OCI-LY7 (cell line): ENCODE measurements at regions of chr14 and their contacts with region 1.

Region 1: GRCh38 chr14:75307700-75308379 is 29.2 kb downstream of the FOS start:
- DNase-seq: peak; percentile 86
- H3K4me3 ChIP-seq: no peak overlapping the region
- H3K27ac ChIP-seq: peak overlapping the region; percentile 19
- H3K4me1 ChIP-seq: peaks cover 31% of the 10 kb centered on the region
- CTCF ChIP-seq: peak; percentile 100

Region 2: GRCh38 chr14:74945823-74946682 is 361.8 kb before region 1 on chr14:
- CTCF ChIA-PET with region 1: no interaction called
- POLR2A ChIA-PET with region 1: no interaction called
- intact Hi-C with region 1: loop called (anchors 5 kb)
- DNase-seq: peak; percentile 79
- H3K4me3 ChIP-seq: no peak overlapping the region
- H3K27ac ChIP-seq: no peak overlapping the region
- H3K4me1 ChIP-seq: peaks cover 46% of the 10 kb centered on the region
- CTCF ChIP-seq: peak; percentile 95

Region 3: DNA sequence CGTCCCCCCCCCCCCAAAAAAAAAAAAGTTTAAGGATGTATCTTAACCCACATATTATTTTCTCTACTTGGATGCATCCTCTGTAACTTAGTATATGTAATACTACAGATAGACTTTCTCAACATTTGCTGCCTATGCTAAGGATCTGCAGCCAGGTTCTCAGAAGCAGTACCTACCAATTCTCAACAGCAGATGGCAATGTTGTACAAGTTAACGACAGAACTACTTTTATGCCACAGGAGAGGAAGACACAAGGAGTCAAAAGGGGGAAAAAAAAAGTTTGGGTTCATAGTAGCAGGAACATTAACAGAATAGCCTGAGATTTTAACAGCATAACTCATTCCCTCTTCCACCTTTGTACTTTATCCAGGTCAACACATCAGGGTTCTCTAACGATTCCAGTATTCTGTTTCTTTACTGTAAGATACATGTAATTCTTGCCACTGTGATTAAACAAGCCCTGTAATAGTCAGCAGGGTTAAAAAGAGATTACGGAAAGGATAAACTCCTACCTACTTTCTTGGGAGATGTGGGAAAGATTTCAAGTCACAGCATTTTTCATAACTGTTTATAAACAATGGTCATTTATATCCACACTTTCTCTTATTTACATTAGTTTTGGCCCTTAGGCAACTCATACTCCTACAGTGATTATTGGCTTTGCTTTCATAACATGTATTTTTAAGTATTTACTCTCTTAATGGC is 175.3 kb before region 1 on chr14:
- CTCF ChIA-PET with region 1: interaction called, 3 read pairs
- POLR2A ChIA-PET with region 1: interaction called, 3 read pairs
- intact Hi-C with region 1: loop called (anchors 1 kb)
- DNase-seq: peak; percentile 82
- H3K4me3 ChIP-seq: no peak overlapping the region
- H3K27ac ChIP-seq: no peak overlapping the region
- H3K4me1 ChIP-seq: peaks cover 15% of the 10 kb centered on the region
- CTCF ChIP-seq: peak; percentile 96

Region 4: GRCh38 chr14:75292081-75292563 is 15.7 kb before region 1 on chr14:
- CTCF ChIA-PET with region 1: no interaction called
- POLR2A ChIA-PET with region 1: no interaction called
- intact Hi-C with region 1: no loop called
- DNase-seq: no peak
- H3K4me3 ChIP-seq: no peak overlapping the region
- H3K27ac ChIP-seq: no peak overlapping the region
- H3K4me1 ChIP-seq: peaks cover 31% of the 10 kb centered on the region
- CTCF ChIP-seq: no peak

Region 5: GRCh38 chr14:75452900-75453747 is 145.3 kb after region 1 on chr14:
- CTCF ChIA-PET with region 1: interaction called, 5 read pairs
- POLR2A ChIA-PET with region 1: interaction called, 6 read pairs
- intact Hi-C with region 1: loop called (anchors 1 kb)
- DNase-seq: no peak
- H3K4me3 ChIP-seq: no peak overlapping the region
- H3K27ac ChIP-seq: peak overlapping the region; percentile 57
- H3K4me1 ChIP-seq: peaks cover 69% of the 10 kb centered on the region
- CTCF ChIP-seq: no peak

Region 6: DNA sequence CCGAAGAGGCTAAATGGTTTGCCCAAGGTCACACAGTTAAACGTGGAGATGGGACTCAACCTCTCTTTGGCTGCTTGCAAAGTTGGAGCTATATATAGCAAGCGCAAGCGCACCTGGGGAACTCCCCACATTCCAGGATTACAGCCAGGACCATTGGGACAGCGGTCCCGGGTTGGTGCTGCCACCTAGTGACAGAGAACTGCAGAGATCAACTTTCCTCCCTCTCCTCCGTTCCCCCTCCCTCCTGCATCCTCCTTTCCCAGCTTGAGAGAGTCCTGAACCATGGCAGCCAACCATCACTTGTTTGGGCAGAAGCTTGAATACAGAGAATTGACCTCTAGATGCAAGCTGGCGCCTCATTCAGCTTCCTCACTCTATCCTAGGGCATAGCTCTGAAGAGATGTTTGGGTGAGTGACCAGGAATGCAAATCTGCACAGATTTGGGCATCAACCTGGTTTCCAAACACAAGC is 253.2 kb after region 1 on chr14:
- CTCF ChIA-PET with region 1: no interaction called
- POLR2A ChIA-PET with region 1: no interaction called
- intact Hi-C with region 1: loop called (anchors 1 kb)
- DNase-seq: peak; percentile 53
- H3K4me3 ChIP-seq: no peak overlapping the region
- H3K27ac ChIP-seq: no peak overlapping the region
- H3K4me1 ChIP-seq: no peaks in the 10 kb centered on the region
- CTCF ChIP-seq: peak; percentile 97